ENCODE measurements at regions of chr4 and their contacts with region 1.

Region 1: DNA sequence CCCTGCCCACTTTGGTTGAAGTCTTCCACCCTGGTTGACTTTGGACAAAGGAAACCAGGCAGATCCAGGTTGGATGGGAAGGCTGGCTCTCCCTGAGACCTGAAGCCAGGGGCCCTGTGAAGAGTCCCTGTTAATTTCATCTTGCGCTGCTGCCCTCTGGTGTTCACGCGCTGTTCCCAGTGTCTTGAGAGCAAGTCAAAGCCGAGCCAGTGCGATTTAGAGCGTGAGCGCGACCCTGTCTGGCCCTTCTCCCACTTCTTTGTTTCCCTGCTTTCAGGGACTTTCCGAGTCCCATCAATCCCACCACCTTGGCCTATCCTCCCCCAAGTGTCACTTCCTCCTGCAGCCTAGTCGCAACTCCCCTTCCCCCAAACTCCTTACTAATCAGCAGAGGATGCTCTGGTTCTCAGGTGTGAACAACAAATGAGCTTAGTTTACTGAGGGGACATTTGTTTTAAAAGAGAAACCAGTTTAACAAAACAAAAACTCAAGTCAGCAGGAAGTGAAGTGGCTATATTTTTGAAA is 25.8 kb upstream of the CHRNA9 start:
- DNase-seq: peak; percentile 95
- ATAC-seq: peak; percentile 68
- H3K4me3 Mint-ChIP-seq: peak overlapping the region; percentile 79
- H3K27ac Mint-ChIP-seq: peak overlapping the region; percentile 98
- H3K4me1 Mint-ChIP-seq: peaks cover 86% of the 10 kb centered on the region
- H3K27me3 Mint-ChIP-seq: no peaks in the 10 kb centered on the region

Region 2: DNA sequence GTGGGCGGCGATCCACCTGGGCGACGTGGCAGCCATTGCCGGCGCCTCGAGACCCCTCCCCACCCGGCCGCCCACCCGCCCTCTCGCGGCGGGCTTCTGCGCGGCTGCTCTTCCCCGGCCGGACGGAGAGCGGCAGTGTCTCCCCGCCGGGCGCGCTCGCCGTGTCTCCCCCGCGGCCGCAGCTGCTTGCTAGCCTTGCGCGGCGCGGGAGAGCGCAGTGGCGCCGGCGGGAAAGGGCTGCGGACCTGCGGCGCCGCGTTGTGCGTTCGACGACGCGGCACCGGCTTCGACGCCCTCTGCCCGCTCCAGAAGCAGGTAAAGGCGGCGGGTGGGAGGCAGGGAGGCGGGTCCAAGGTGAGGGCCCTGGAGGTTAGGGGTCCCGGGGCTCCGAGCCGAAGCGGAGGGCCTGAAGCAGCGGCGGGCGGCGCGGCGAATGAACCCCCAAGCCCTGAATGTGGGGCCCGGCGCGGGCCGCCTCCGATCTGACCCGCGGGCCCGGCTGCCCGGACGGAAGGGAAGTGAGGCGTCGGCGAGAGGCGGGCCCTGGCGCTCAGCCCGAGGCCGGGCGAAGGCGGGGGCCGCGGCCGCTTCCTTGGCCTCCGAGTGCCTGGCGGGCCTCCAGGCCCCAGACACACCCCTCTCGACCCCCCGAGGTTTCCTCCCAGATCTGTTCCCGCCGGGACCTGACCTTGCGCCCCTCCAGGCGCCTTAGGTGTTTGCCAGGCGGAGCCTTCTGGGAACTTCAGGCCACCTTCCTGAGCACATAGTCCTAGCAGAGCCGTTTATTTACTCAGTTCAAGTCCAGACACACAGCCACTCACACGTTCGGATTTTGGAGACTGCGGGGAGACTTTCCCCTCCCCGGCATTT is 252.4 kb before region 1 on chr4 and contains the start of gene N4BP2:
- CTCF ChIA-PET with region 1: interaction called, 15 read pairs
- POLR2A ChIA-PET with region 1: interaction called, 27 read pairs
- DNase-seq: peak; percentile 80
- ATAC-seq: peak; percentile 49
- H3K4me3 Mint-ChIP-seq: peak within 1 kb of the TSS; percentile 93
- H3K27ac Mint-ChIP-seq: peak within 1 kb of the TSS; percentile 96
- H3K4me1 Mint-ChIP-seq: peaks cover 37% of the 10 kb centered on the region
- H3K27me3 Mint-ChIP-seq: peaks cover 8% of the 10 kb centered on the region
- total RNA-seq, gene N4BP2: 25.1 to 29.0 TPM

Region 3: DNA sequence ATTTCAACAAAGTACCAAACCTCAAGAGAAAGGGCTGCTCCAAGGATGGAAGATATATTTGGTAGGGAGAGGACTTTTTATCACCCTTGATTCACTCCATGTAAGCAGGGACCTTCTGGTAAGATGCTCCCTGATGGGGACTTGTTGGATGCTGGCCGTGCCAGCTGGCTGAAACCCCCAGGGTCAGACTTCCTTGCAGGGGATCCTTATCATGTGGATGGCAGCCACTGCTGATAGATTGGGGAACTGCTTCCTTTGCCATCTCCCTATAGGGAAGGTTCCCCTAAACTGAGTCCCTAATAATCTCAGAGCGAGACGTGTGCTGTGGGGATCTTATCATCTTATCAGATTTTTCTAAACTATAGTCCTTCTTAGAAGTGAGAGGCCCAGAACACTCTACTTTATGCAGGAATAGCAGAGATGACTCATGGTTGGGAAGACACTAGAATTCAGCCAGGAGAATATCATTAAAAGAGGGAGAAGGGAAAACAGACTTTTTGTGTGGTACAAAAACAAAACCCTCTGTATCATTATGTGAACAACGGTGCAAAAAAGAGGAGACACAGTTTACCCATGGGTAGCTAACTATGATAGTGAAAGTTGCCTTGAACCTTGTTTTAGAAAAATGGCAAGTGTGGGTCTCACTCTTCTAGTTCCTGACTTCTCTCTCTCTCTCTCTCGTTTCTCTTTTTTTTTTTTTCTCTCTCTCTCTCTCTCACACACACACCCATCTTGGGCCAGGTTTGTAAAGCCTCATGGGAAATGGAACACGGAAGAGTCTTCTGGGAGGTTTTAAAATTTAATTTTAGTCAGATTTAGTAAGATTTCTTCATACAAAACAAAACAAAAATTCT is 96.4 kb before region 1 on chr4:
- CTCF ChIA-PET with region 1: interaction called, 70 read pairs
- POLR2A ChIA-PET with region 1: interaction called, 8 read pairs
- DNase-seq: peak; percentile 33
- ATAC-seq: peak; percentile 25
- H3K4me3 Mint-ChIP-seq: peak overlapping the region; percentile 68
- H3K27ac Mint-ChIP-seq: peak overlapping the region; percentile 86
- H3K4me1 Mint-ChIP-seq: peaks cover 90% of the 10 kb centered on the region
- H3K27me3 Mint-ChIP-seq: no peaks in the 10 kb centered on the region

Region 4: DNA sequence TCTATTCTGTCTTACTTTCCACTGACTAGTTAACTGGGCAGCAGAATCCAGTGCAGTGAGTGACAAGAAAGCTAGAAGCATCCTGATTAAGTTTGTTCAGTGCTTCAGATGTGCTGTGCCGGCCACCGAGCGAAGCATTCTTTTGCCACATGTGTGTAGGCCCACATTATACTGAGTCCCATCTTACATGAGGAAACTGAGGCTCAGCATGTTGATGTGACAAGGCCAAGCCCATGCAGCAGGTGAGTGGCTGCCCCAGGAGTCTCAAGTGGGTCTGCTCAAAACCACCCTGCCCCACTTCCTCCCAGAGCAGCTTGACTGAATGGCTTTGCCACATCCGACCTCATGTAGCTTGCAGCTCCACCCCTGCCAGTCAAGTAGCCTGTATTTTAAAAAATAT is 62.0 kb before region 1 on chr4:
- CTCF ChIA-PET with region 1: interaction called, 16 read pairs
- POLR2A ChIA-PET with region 1: interaction called, 15 read pairs
- DNase-seq: peak; percentile 85
- ATAC-seq: peak; percentile 68
- H3K4me3 Mint-ChIP-seq: peak overlapping the region; percentile 72
- H3K27ac Mint-ChIP-seq: peak overlapping the region; percentile 94
- H3K4me1 Mint-ChIP-seq: peaks cover 78% of the 10 kb centered on the region
- H3K27me3 Mint-ChIP-seq: no peaks in the 10 kb centered on the region

Region 5: GRCh38 chr4:40275065-40275730 is 34.1 kb before region 1 on chr4:
- CTCF ChIA-PET with region 1: interaction called, 13 read pairs
- POLR2A ChIA-PET with region 1: no interaction called
- DNase-seq: peak; percentile 48
- ATAC-seq: peak; percentile 70
- H3K4me3 Mint-ChIP-seq: no peak overlapping the region
- H3K27ac Mint-ChIP-seq: peak overlapping the region; percentile 36
- H3K4me1 Mint-ChIP-seq: peaks cover 32% of the 10 kb centered on the region
- H3K27me3 Mint-ChIP-seq: no peaks in the 10 kb centered on the region

Region 6: GRCh38 chr4:40325189-40326019 is 16.1 kb after region 1 on chr4:
- CTCF ChIA-PET with region 1: interaction called, 96 read pairs
- POLR2A ChIA-PET with region 1: interaction called, 3 read pairs
- DNase-seq: peak; percentile 80
- ATAC-seq: peak; percentile 98
- H3K4me3 Mint-ChIP-seq: no peak overlapping the region
- H3K27ac Mint-ChIP-seq: peak overlapping the region; percentile 50
- H3K4me1 Mint-ChIP-seq: peaks cover 37% of the 10 kb centered on the region
- H3K27me3 Mint-ChIP-seq: no peaks in the 10 kb centered on the region